Left colon (tissue), 2 donors: ENCODE measurements at regions of chr2 and their contacts with region 1.

Region 1: GRCh38 chr2:39379643-39380524 is 57.2 kb downstream of the MAP4K3 start:
- DNase-seq: no peak
- ATAC-seq: peak; percentile 89

Region 2: GRCh38 chr2:39338502-39338901 is 41.4 kb before region 1 on chr2:
- intact Hi-C with region 1: no loop called
- DNase-seq: no peak
- ATAC-seq: no peak

Region 3: DNA sequence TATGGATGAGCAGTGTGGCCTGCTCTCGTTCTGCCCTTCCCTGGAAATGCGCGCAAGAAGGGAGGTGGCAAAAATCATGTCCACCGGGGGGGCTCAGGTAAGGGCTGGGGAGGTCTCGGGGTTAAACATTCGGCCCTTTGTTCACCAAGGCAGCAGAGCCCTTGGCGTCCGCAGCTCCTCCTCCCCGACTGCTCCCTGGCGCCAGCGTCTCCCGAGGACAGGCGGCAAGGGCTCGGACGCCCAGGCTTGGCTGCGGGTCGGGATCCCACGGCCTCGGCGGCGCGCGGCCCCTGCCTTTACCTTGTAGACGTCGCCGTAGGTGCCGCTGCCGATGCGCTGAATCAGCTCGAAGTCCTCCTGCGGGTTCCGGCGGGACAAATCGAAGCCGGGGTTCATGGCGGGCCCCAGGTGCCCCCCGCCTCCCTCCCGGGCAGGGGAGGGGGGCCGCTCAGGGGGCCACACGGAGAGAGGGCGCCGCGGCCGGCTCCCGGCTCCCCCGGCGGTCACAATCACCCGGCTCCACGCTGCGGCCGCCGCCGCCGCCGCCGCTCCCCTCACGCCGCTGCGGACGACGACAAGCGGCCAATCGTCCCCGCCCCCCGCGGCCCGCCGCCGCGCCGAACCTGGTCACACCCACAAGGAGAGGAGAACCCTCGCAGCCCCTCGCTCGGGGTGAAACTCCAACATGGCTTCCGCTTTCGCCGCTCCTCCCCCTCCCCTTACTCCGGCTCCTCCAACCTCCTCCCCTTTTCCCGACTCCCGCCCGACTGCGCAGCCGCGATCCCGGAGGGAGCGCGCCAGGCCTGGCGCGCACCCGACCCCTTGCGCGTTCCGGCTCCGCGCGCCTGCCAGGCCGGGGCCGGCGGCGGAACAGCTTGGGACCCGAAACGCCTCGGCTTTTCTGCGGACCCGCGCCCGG is 57.0 kb after region 1 on chr2 and contains the start of gene MAP4K3:
- intact Hi-C with region 1: loop called in 1 of 2 experiments (anchors 10 kb)
- DNase-seq: peak; percentile 93 to 96
- ATAC-seq: peak; percentile 86
- total RNA-seq, gene MAP4K3: 29.4 to 30.0 TPM